Cardiac septum (tissue), 1 donor: ENCODE measurements at regions of chr2 and their contacts with region 1.

Region 1: GRCh38 chr2:151409601-151410484 is at the start of gene RIF1:
- DNase-seq: peak; percentile 94
- total RNA-seq, gene RIF1: 16.1 TPM

Region 2: DNA sequence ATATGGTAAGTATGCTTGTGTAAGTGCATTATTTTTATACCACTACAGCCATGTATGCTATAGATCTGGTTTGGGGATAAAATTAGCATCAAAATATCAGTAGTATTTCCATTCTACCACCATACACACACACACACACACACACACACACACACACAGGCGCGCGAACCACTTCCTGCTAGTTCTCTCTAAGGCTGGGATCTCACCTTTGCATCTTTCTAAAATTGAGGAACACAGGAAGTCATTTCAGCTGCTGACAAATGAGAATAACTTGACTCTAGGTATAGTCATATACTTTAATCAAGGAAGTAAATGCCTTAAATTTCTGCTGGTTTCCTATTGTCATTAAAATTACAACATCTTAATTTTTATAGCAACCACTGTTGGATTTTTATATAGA is 220.7 kb before region 1 on chr2:
- intact Hi-C with region 1: no loop called
- DNase-seq: no peak

Region 3: DNA sequence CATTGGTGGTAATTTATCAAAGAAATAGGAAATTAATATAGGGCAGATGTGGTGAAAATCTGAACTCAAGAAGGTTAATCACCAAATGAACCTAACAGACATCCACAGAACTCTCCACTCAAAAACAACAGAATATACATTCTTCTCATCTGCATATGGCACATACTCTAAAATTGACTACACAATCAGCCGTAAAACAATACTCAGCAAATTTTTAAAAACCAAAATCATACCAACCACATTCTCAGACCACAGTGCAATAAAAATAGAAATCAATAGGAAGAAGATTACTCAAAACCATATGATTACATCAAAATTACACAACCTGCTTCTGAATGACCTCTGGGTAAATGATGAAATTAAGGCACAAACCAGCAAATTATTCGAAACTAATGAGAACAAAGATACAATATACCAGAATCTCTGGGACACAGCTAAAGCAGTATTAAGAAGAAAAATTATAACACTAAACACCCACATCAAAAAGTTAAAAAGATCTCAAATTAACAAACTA is 179.2 kb before region 1 on chr2:
- intact Hi-C with region 1: no loop called
- DNase-seq: no peak

Region 4: DNA sequence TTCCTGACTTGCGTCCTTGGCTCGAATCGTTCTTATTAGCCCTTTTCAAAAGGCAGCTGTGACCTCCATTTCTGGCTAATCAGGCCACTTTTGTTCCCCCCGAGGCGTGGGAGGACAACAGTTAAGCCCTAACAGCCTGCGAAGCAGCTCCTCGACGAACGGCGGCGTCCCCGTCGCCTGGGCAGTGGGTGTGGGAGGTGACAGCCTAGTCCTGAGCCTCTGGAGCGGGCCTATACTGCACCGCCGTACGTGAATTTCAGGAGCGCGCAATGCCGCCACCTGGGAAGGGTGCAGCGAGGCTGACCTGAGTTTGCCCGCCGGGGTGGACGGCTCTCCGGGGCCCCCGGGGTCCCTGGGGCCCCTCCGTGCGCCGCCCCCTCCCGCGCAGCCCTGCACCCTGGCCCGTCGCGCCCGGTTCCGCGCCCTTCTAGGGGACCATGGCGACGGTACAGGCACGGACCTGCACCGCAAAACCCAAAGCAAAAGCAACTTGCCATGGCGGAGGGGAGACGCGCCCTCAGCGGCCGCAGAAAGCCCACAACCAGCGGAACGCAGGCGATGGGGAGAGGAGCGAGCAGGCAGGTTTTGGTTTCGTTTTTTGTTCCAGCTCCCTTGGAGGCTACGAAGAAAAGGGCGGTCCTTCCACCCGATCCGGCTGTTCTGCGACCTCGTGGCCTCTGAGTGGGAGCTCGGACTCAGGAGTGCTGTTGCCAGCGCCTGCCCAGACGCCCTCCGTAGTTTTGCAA is 148.4 kb before region 1 on chr2 and contains the start of gene RBM43:
- intact Hi-C with region 1: loop called (anchors 2 kb)
- DNase-seq: peak; percentile 93
- total RNA-seq, gene RBM43: 1.5 TPM

Region 5: GRCh38 chr2:151475071-151475470 is 65.2 kb after region 1 on chr2:
- intact Hi-C with region 1: no loop called
- DNase-seq: no peak